ENCODE measurements at regions of chr2 and their contacts with region 1.

Region 1: DNA sequence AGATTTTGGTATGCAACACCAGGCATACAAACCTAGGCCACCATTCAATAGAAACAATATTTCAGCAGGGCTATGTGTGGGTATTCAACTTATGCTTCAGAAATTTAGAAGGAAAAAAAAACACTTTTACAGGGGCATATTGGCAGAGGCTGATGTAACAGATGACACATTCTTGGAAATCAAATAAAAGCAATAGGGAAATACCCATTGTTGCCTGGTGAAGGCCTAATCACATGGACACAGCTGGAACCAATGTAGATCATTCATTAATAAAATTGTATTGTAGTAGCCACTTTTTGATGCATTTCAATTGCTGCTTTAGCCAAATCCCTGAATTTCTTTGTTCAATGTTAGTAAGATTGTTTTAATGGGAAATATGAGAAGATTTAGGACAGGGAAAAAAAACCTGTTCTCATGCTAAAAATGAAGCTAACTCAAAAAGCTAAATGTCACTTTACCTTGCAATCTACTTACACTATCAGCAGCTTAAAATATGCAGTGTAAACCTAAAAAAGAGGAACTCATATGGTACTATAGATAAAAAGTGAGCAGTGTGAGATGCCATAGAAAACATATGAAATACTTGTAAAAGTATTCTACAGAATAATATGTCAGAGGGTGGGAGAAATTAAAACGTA is 289.4 kb downstream of the ZEB2 start:
- DNase-seq: no peak
- H3K4me3 Mint-ChIP-seq: no peak overlapping the region
- H3K27ac Mint-ChIP-seq: no peak overlapping the region
- H3K4me1 Mint-ChIP-seq: peaks cover 58% of the 10 kb centered on the region
- H3K27me3 Mint-ChIP-seq: no peaks in the 10 kb centered on the region

Region 2: GRCh38 chr2:144198117-144198516 is 32.5 kb before region 1 on chr2:
- intact Hi-C with region 1: loop called (anchors 5 kb)
- DNase-seq: no peak
- H3K4me3 Mint-ChIP-seq: no peak overlapping the region
- H3K27ac Mint-ChIP-seq: peak overlapping the region; percentile 20
- H3K4me1 Mint-ChIP-seq: peaks cover 66% of the 10 kb centered on the region
- H3K27me3 Mint-ChIP-seq: no peaks in the 10 kb centered on the region

Region 3: DNA sequence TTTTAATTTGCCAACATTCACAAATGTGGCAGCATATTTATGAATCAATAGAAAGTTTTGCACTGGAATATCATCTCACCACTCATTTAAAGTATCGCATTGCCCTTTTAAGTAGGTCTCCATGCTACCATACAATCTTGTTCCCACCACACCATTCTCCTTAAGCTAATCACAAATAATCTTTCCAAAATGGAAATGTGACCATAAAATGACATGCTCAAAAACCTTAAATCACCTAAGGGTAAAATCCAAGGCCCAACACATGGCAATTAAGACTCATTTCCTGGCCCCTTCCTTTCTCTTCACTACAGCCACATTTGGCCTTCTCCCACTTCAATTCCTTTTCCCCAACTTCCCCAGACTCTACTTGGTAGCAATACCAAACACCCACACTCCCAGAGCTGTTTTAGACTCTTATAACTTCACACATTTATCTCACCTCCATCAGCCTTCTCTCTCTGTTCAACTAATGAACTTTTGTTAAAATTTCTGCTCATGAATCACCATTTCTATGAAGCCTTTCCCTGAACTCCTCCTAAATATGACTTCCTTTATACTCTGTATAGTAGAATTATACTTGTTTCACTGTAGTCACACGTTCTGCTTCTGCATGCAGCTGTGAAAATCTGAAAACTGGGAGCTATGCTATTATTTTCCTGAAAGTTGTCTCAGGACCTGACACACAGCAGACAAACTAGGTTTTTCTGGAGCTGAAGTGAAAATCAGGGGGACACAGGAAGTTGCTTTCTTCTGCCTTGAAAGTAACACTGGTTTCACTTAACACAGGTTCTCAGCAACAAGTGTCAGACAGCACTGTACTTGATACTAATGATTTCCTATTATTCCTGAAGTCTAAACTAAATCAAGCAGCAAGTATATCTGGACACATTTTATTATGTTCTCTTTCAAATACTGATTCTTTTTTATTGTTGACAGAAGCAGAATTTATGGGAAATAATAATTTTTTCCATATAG is 14.6 kb before region 1 on chr2:
- intact Hi-C with region 1: loop called (anchors 2 kb)
- DNase-seq: no peak
- H3K4me3 Mint-ChIP-seq: peak overlapping the region; percentile 25
- H3K27ac Mint-ChIP-seq: peak overlapping the region; percentile 82
- H3K4me1 Mint-ChIP-seq: peaks cover 34% of the 10 kb centered on the region
- H3K27me3 Mint-ChIP-seq: no peaks in the 10 kb centered on the region

Region 4: DNA sequence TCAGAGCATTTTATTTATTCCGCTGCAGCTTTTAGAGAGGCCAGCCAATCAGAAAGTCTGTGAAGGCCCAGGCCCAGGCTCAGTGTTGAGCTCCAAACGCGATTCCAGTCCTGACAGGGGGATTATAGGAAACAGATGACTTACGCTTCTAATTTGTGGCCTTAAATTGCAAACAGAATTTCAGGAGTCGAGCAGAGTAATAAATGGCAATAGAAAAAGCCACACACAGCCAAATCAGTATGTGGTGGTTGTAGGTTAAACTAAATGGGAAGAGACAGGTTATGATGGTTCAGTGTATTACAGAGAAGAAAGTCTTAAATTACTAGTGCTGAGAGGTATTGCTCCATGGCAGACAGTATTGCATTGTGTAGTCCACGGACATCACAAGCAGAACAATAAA is 420.3 kb after region 1 on chr2:
- intact Hi-C with region 1: no loop called
- DNase-seq: no peak
- H3K4me3 Mint-ChIP-seq: no peak overlapping the region
- H3K27ac Mint-ChIP-seq: no peak overlapping the region
- H3K4me1 Mint-ChIP-seq: no peaks in the 10 kb centered on the region
- H3K27me3 Mint-ChIP-seq: peaks cover 3% of the 10 kb centered on the region

Measured in activated T-helper 1 cell treated with anti-CD3 and anti-CD28 coated beads, Interleukin-12 subunit alpha, Interleukin-12 subunit beta, Interleukin-2, Interleukin-4 antibody, amounts not matched to agents 30 ng/mL and 10 ng/mL and 1 ng/mL, durations not matched to agents 14 hours and 24 hours and 36 hours (primary cell).